Sigmoid colon (tissue), 7 donors: ENCODE measurements at regions of chr10 and their contacts with region 1.

Region 1: DNA sequence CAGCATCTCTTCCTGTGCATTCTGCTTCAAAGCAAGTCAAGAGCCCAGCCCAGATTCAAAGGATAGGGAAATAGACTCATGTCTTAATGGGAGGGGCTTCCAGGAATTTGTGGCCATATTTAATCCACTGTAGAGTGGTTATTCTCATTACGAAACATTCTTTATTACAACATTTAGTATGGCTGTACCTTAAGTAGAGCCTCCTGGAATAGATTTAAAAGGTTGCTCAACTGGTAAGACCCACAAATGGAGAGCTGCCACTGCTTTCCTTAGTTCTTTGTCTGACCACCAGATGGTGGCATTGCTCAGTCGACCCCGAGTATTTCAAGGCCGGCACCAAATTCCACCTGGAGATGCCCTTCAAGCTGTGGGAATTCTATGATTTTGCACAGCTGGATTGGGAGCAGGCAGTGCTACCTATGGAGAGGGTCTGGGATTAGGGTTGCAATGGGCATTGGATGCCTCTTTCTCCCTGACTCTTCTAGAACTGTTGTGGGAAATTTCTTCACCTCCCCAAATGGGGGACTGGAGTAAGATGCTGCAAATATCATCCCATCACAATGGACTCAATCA is 102.2 kb downstream of the RBM20 start:
- DNase-seq: peak; percentile 75
- H3K4me3 ChIP-seq: no peak overlapping the region
- H3K27ac ChIP-seq: peak overlapping the region in 2 of 4 donors; percentile 8 to 23
- H3K4me1 ChIP-seq: peaks cover 0 to 25% (median 3%) of the 10 kb centered on the region in 4 donors
- H3K27me3 ChIP-seq: no peaks in the 10 kb centered on the region
- CTCF ChIP-seq: peak; percentile 58 to 84 (median 80)
- EP300 ChIP-seq: no peak
- POLR2A ChIP-seq: no peak

Region 2: GRCh38 chr10:110893559-110894179 is 147.3 kb after region 1 on chr10:
- intact Hi-C with region 1: loop called (anchors 2 kb)
- DNase-seq: no peak
- H3K4me3 ChIP-seq: no peak overlapping the region
- H3K27ac ChIP-seq: peak overlapping the region in 2 of 4 donors; percentile 48 to 50
- H3K4me1 ChIP-seq: peaks cover 0 to 51% (median 39%) of the 10 kb centered on the region in 4 donors
- H3K27me3 ChIP-seq: no peaks in the 10 kb centered on the region
- CTCF ChIP-seq: peak; percentile 18 to 58 (median 46)
- EP300 ChIP-seq: no peak
- POLR2A ChIP-seq: no peak